CD4-positive, alpha-beta memory T cell (primary cell): ENCODE measurements at regions of chr11 and their contacts with region 1.

Region 1: GRCh38 chr11:95231127-95231880 is at the start of gene SESN3:
- DNase-seq: peak; percentile 99
- H3K4me3 ChIP-seq: peak within 1 kb of the TSS; percentile 81 to 89
- H3K4me3 Mint-ChIP-seq: peak within 1 kb of the TSS; percentile 92 to 99 (median 97)
- H3K27ac ChIP-seq: peak within 1 kb of the TSS; percentile 68
- H3K27ac Mint-ChIP-seq: peak within 1 kb of the TSS; percentile 85 to 96 (median 93)
- H3K4me1 ChIP-seq: peaks cover 50% of the 10 kb centered on the region
- H3K4me1 Mint-ChIP-seq: peaks cover 28 to 59% (median 34%) of the 10 kb centered on the region in 4 donors
- H3K27me3 ChIP-seq: no peaks in the 10 kb centered on the region
- H3K27me3 Mint-ChIP-seq: no peaks in the 10 kb centered on the region
- total RNA-seq, gene SESN3: 204 to 211 TPM

Region 2: GRCh38 chr11:95187723-95188122 is 43.6 kb before region 1 on chr11:
- CTCF ChIA-PET with region 1: interaction called, 3 read pairs
- POLR2A ChIA-PET with region 1: interaction called, 6 read pairs
- intact Hi-C with region 1: loop called (anchors 5 kb)
- DNase-seq: no peak
- H3K4me3 ChIP-seq: no peak overlapping the region
- H3K4me3 Mint-ChIP-seq: no peak overlapping the region
- H3K27ac ChIP-seq: no peak overlapping the region
- H3K27ac Mint-ChIP-seq: peak overlapping the region in 5 of 7 donors; percentile 5 to 80 (median 60)
- H3K4me1 ChIP-seq: no peaks in the 10 kb centered on the region
- H3K4me1 Mint-ChIP-seq: peaks cover 8 to 15% (median 12%) of the 10 kb centered on the region in 4 donors
- H3K27me3 ChIP-seq: no peaks in the 10 kb centered on the region
- H3K27me3 Mint-ChIP-seq: no peaks in the 10 kb centered on the region

Region 3: GRCh38 chr11:95248666-95249467 is 17.6 kb after region 1 on chr11:
- CTCF ChIA-PET with region 1: interaction called, 26 read pairs
- POLR2A ChIA-PET with region 1: interaction called, 127 read pairs
- intact Hi-C with region 1: loop called (anchors 1 kb)
- DNase-seq: no peak
- H3K4me3 ChIP-seq: no peak overlapping the region
- H3K4me3 Mint-ChIP-seq: no peak overlapping the region
- H3K27ac ChIP-seq: no peak overlapping the region
- H3K27ac Mint-ChIP-seq: peak overlapping the region in 2 of 7 donors; percentile 6 to 54
- H3K4me1 ChIP-seq: peaks cover 7% of the 10 kb centered on the region
- H3K4me1 Mint-ChIP-seq: peaks cover under 1 to 11% (median 7%) of the 10 kb centered on the region in 4 donors
- H3K27me3 ChIP-seq: no peaks in the 10 kb centered on the region
- H3K27me3 Mint-ChIP-seq: peaks cover 0 to 2% of the 10 kb centered on the region in 2 donors

Region 4: DNA sequence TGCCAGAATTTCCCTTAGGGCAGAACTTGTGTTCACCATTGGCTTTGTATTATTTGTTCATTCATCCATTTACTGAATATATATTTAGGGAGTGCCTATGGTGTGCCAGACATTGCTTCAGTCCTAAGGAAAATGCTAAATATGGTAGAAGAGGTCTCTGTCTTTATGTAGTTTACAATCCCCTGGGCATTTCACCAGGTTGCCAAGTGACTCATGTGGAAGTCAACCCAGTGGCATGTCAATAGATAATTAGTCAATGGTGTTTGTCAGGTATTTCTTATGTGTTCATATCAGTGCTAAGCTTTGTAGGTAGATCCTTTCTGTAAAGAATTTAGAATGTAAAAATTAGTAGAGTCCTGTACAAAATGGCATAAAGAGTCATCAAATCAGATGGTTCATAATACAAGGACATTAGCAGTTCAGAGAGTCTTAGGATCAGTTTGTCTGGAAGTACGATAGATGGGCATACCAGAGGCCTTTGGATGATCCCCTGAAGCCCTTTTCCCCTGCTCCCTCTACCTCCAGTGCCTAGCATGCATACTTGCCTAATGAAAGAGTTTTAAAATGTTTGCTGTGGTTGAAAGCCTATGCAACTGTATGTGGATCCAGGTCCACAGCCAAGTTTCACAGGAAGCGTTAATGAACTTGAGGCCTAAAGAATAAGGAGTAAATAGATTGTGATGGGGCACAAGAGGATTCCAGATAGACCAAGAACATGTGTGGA is 58.2 kb after region 1 on chr11:
- CTCF ChIA-PET with region 1: no interaction called
- POLR2A ChIA-PET with region 1: no interaction called
- intact Hi-C with region 1: no loop called
- DNase-seq: no peak
- H3K4me3 ChIP-seq: no peak overlapping the region
- H3K4me3 Mint-ChIP-seq: no peak overlapping the region
- H3K27ac ChIP-seq: no peak overlapping the region
- H3K27ac Mint-ChIP-seq: no peak overlapping the region
- H3K4me1 ChIP-seq: no peaks in the 10 kb centered on the region
- H3K4me1 Mint-ChIP-seq: no peaks in the 10 kb centered on the region
- H3K27me3 ChIP-seq: no peaks in the 10 kb centered on the region
- H3K27me3 Mint-ChIP-seq: no peaks in the 10 kb centered on the region

Region 5: GRCh38 chr11:95443386-95443785 is 212.1 kb after region 1 on chr11:
- CTCF ChIA-PET with region 1: no interaction called
- POLR2A ChIA-PET with region 1: no interaction called
- intact Hi-C with region 1: loop called (anchors 5 kb)
- DNase-seq: peak; percentile 8 to 50 (median 12)
- H3K4me3 ChIP-seq: no peak overlapping the region
- H3K4me3 Mint-ChIP-seq: peak overlapping the region in 6 of 8 donors; percentile 28 to 68 (median 46)
- H3K27ac ChIP-seq: no peak overlapping the region
- H3K27ac Mint-ChIP-seq: peak overlapping the region in 3 of 7 donors; percentile 3 to 72 (median 18)
- H3K4me1 ChIP-seq: peaks cover 12% of the 10 kb centered on the region
- H3K4me1 Mint-ChIP-seq: peaks cover 5 to 25% (median 20%) of the 10 kb centered on the region in 4 donors
- H3K27me3 ChIP-seq: no peaks in the 10 kb centered on the region
- H3K27me3 Mint-ChIP-seq: no peaks in the 10 kb centered on the region

Region 6: GRCh38 chr11:95699631-95700470 is 468.5 kb after region 1 on chr11:
- CTCF ChIA-PET with region 1: interaction called, 102 read pairs
- POLR2A ChIA-PET with region 1: interaction called, 241 read pairs
- intact Hi-C with region 1: loop called (anchors 1 kb)
- DNase-seq: peak; percentile 39 to 52 (median 43)
- H3K4me3 ChIP-seq: peak overlapping the region; percentile 3 to 33
- H3K4me3 Mint-ChIP-seq: peak overlapping the region; percentile 72 to 88 (median 82)
- H3K27ac ChIP-seq: peak overlapping the region; percentile 65
- H3K27ac Mint-ChIP-seq: peak overlapping the region; percentile 90 to 97 (median 96)
- H3K4me1 ChIP-seq: peaks cover 80% of the 10 kb centered on the region
- H3K4me1 Mint-ChIP-seq: peaks cover 38 to 60% (median 54%) of the 10 kb centered on the region in 4 donors
- H3K27me3 ChIP-seq: no peaks in the 10 kb centered on the region
- H3K27me3 Mint-ChIP-seq: no peaks in the 10 kb centered on the region

Region 7: GRCh38 chr11:96389720-96390487 is 1158.6 kb after region 1 on chr11 and contains the starts of genes CCDC82 and JRKL:
- CTCF ChIA-PET with region 1: no interaction called
- POLR2A ChIA-PET with region 1: no interaction called
- intact Hi-C with region 1: loop called (anchors 1 kb)
- DNase-seq: peak; percentile 97 to 99 (median 98)
- H3K4me3 ChIP-seq: peak within 1 kb of the TSS; percentile 85 to 93
- H3K4me3 Mint-ChIP-seq: peak within 1 kb of the TSS; percentile 92 to 98 (median 94)
- H3K27ac ChIP-seq: peak within 1 kb of the TSS; percentile 79
- H3K27ac Mint-ChIP-seq: peak within 1 kb of the TSS; percentile 91 to 98 (median 97)
- H3K4me1 ChIP-seq: peaks cover 36% of the 10 kb centered on the region
- H3K4me1 Mint-ChIP-seq: peaks cover 22 to 59% (median 37%) of the 10 kb centered on the region in 4 donors
- H3K27me3 ChIP-seq: no peaks in the 10 kb centered on the region
- H3K27me3 Mint-ChIP-seq: no peaks in the 10 kb centered on the region
- total RNA-seq, gene CCDC82: 37.9 to 42.8 TPM
- total RNA-seq, gene JRKL: 18.3 to 20.0 TPM